Calu3 (cell line): ENCODE measurements at regions of chr15 and their contacts with region 1.

Region 1: DNA sequence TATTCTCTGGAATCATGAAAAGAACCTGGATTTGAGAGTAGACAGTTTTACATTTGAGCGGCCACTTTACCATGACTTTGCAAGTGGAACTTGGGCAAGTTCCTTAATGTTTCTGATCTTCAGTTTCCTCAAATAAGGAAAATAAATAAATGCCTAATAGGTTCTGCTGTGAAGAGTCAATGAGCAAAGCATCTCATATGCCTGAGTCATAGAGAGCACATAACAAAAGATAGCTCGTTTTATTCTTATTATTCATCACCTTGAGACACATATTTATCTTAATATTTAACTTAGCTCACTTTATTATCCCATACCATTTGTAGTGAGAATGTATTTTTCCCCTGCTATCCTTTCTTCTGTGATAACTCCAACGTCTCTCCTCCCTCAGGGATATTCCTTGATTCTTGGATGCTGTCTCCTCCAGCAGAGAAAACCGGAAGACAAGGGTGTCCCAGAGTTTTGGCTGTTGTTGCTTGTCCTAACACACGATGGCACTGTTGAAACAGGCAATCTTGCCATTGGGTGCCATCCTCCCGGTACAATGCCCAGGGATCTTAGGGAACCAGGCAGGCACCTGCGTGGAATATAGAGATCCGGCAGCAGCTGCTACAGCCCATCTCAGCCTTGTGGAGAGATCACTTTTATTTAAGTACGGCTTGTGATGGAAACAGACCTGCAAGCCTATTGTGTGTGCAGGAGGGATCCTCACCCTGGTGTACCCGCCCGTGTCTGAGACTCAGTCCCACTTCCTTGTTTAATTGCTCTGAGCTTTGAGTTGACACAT is 33.3 kb upstream of the VPS33B start:
- DNase-seq: peak; percentile 81
- H3K4me3 Mint-ChIP-seq: no peak overlapping the region
- H3K27ac Mint-ChIP-seq: no peak overlapping the region
- H3K4me1 Mint-ChIP-seq: peaks cover 9% of the 10 kb centered on the region
- H3K27me3 Mint-ChIP-seq: peaks cover 97% of the 10 kb centered on the region
- CTCF ChIP-seq: peak; percentile 62

Region 2: DNA sequence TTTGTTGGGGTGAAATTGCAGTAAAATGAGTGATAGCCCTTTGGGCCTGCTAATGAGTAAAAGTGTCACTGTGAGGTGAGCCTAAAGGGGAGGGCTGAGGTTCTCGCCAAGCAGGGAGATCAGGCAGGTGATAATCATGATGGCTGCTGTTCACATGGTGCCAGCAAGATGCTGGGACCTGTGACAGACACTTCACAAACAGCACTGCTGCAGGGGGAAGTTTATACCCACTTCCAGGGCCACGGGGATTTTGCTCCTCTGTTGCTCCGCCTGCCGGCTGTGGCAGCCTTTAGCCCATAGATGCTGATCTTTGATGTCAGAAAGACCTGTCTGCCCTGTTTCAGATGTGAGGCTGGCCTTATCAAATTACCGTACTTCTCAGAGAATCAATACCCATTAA is 141.0 kb after region 1 on chr15:
- CTCF ChIA-PET with region 1: no interaction called
- intact Hi-C with region 1: no loop called
- DNase-seq: peak; percentile 21
- H3K4me3 Mint-ChIP-seq: no peak overlapping the region
- H3K27ac Mint-ChIP-seq: no peak overlapping the region
- H3K4me1 Mint-ChIP-seq: peaks cover under 1% of the 10 kb centered on the region
- H3K27me3 Mint-ChIP-seq: peaks cover 66% of the 10 kb centered on the region
- CTCF ChIP-seq: no peak

Region 3: DNA sequence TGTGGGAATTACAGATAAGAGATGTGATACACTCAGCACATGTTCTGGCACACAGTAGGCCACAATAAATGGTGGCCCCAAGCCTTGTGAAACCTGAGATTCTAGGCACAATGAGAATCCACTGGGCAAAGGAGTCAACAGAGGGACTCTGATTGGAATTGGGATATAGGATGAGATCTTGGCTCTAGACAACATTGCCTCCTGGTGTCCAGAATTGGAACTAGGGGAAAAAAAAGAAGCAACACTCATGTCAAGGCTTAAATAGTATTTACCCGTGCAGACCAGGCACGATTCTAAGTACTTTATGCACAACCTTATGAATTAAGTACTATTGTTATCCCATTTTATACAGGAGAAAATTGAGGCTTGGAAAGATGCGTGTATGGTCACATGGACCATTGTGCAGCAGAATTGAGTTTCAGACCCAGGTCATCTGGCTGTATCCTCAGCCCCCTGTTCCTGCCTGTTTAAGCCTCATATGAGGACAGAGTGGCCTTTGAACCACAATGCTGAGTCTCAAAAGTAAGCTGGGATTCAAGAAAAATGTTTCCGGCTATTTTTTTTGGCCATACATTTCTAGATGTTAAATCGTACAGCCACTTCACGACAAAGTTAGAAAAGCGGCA is 169.1 kb after region 1 on chr15:
- CTCF ChIA-PET with region 1: interaction called, 15 read pairs
- intact Hi-C with region 1: loop called (anchors 1 kb)
- DNase-seq: peak; percentile 72
- H3K4me3 Mint-ChIP-seq: no peak overlapping the region
- H3K27ac Mint-ChIP-seq: no peak overlapping the region
- H3K4me1 Mint-ChIP-seq: no peaks in the 10 kb centered on the region
- H3K27me3 Mint-ChIP-seq: peaks cover 98% of the 10 kb centered on the region
- CTCF ChIP-seq: peak; percentile 64